H1 (cell line): ENCODE measurements at regions of chr1 and their contacts with region 1.

Region 1: DNA sequence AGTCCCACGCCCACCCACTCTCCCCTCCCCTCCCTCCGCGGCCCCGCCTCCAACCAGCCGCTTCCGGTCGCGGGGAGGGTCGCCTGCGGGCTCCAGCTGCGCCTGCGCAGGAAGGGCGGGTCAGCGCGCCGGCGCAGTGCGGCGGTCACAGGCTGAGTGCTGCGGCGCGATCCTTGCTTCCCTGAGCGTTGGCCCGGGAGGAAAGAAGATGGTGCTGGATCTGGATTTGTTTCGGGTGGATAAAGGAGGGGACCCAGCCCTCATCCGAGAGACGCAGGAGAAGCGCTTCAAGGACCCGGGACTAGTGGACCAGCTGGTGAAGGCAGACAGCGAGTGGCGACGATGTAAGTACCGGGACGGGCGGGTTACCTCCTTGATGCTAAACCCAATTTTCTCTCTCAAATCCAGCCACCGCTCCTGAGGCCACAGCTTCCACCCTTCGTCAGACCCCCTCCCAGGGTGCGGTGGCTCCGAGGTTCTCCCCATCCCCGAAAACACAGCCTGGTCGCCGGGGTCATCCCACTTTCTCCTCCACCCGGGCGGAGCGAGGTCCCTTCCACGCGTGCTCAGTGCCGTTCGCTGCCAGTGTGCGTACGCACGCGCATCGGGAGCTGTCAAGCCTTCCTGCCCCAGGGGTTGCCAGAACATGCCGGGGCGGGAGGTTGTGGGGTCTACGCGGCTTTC is at the start of gene SARS1:
- DNase-seq: peak in 1 of 2 experiments; percentile 91
- H3K4me3 ChIP-seq: peak within 1 kb of the TSS; percentile 88 to 99 (median 96)
- H3K27ac ChIP-seq: peak within 1 kb of the TSS; percentile 78
- H3K4me1 ChIP-seq: peaks cover 0 to 5% (median 2%) of the 10 kb centered on the region in 4 experiments; a peak in 2 of 7 replicates
- H3K27me3 ChIP-seq: no peaks in the 10 kb centered on the region
- CTCF ChIP-seq: no peak
- EP300 ChIP-seq: no peak
- POLR2A ChIP-seq: peak in 1 of 2 experiments; percentile 69; a peak in 1 of 3 replicates
- RAD21 ChIP-seq: no peak
- total RNA-seq, gene SARS1: 136 and 146 TPM in 2 replicates

Region 2: GRCh38 chr1:109201123-109201703 is 12.7 kb before region 1 on chr1:
- CTCF ChIA-PET with region 1: interaction called, 82 read pairs
- POLR2A ChIA-PET with region 1: interaction called, 24 read pairs
- DNase-seq: peak in 1 of 2 experiments; percentile 86
- H3K4me3 ChIP-seq: no peak overlapping the region
- H3K27ac ChIP-seq: no peak overlapping the region
- H3K4me1 ChIP-seq: peaks cover 0 to 4% (median 1%) of the 10 kb centered on the region in 4 experiments; a peak in 1 of 7 replicates
- H3K27me3 ChIP-seq: no peaks in the 10 kb centered on the region; a peak in 1 of 7 replicates
- CTCF ChIP-seq: peak; percentile 65 to 82 (median 75)
- EP300 ChIP-seq: no peak
- POLR2A ChIP-seq: no peak
- RAD21 ChIP-seq: peak; percentile 80 to 90

Region 3: DNA sequence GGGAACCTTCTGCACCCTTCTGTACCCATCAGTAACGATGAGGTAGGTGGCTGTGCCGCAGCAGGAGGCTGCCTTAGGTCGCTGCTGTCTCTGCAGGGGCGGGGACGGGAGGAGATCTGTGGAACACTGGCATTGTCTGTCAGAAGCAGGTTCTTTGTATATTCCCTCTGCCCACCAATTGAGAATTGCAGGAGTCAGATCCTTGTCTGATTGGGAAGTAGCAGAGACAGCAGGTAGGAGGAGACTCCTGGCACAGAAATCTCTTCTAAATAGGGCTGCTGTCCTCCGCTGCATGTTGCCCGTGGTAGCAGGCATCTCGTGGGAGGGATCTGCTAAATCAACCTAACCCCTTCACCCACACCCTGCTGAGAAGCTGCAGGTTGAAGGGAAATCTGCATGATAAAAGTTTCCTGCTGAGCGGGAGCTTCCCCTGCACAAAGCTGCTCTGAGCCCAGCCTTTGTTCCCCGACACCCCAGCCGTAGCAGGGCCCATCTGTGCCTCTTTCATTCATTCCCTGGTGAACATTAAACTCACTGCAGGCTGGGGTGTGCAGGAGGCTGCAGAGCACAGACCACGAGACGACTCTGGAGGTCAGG is 15.7 kb after region 1 on chr1:
- CTCF ChIA-PET with region 1: interaction called, 651 read pairs
- POLR2A ChIA-PET with region 1: interaction called, 45 read pairs
- DNase-seq: peak; percentile 88 to 96
- H3K4me3 ChIP-seq: peak overlapping the region; percentile 22 to 43 (median 34); a peak in 7 of 8 replicates
- H3K27ac ChIP-seq: peak overlapping the region; percentile 47
- H3K4me1 ChIP-seq: peaks cover 9 to 33% (median 15%) of the 10 kb centered on the region in 4 experiments
- H3K27me3 ChIP-seq: no peaks in the 10 kb centered on the region
- CTCF ChIP-seq: no peak
- EP300 ChIP-seq: peak in 1 of 2 experiments; percentile 75; a peak in 1 of 3 replicates
- POLR2A ChIP-seq: no peak; a peak in 1 of 3 replicates
- RAD21 ChIP-seq: 0 out of 4 replicates have a peak, but pooled peaks of 1 of the 2 experiments have one; percentile 21

Region 4: GRCh38 chr1:109239580-109240095 is 25.7 kb after region 1 on chr1:
- CTCF ChIA-PET with region 1: interaction called, 651 read pairs
- POLR2A ChIA-PET with region 1: interaction called, 45 read pairs
- DNase-seq: peak; percentile 65 to 75
- H3K4me3 ChIP-seq: no peak overlapping the region
- H3K27ac ChIP-seq: peak overlapping the region; percentile 13; the same call in 1 of the 2 replicates
- H3K4me1 ChIP-seq: peaks cover 21 to 44% (median 31%) of the 10 kb centered on the region in 4 experiments
- H3K27me3 ChIP-seq: no peaks in the 10 kb centered on the region
- CTCF ChIP-seq: peak; percentile 78 to 91 (median 89)
- EP300 ChIP-seq: 0 out of 3 replicates have a peak, but pooled peaks of 1 of the 2 experiments have one; percentile 3
- POLR2A ChIP-seq: no peak
- RAD21 ChIP-seq: peak; percentile 29 to 60

Region 5: DNA sequence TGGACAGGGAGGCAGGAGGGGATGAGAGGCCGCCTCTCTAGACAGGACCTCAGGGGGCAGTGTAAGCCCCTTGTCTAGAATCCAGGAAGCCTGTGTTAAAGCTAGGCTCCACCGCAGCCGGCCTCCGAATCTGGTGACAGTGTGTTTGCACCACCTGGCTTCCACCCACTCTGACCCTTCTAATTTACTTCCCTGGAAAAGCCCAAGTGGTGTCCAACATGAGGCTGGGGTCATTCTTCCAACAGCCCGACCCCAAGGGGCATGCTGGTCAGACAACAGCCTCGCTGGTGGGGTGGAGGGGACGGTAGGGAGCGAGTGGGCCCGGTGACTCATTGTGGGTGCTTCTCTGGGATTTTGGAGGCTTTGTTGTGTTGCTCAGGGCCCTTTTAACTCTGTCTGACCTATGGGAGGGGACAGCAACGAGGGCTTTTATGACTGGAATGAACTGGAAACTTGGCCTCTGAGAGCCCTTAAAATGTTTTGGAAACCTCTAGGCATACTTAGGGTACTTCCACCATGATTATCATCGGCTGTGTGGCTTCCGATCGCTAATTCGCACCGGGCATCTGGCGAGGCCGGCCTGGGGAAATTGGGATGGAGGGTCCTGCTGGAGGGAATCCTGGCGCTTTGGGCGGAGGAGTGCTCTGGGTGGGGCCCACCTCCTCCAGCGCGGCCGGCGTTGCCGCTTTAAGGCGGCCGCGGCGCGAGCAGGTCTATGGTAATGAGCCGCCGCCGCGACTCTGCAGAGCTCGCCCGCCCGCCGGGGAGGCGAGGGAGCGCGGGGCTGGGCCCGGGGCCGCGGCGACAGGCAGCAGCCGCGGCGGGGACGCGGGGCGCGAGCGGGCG is 35.1 kb after region 1 on chr1 and contains the start of gene CELSR2:
- CTCF ChIA-PET with region 1: interaction called, 651 read pairs
- POLR2A ChIA-PET with region 1: interaction called, 36 read pairs
- DNase-seq: peak; percentile 66 to 90
- H3K4me3 ChIP-seq: peak within 1 kb of the TSS; percentile 28 to 62 (median 34); a peak in 7 of 8 replicates
- H3K27ac ChIP-seq: no peak within 1 kb of the TSS; the same call in 1 of the 2 replicates
- H3K4me1 ChIP-seq: peaks cover 0 to 23% (median 20%) of the 10 kb centered on the region in 4 experiments; a peak in 6 of 7 replicates
- H3K27me3 ChIP-seq: peaks cover 0 to 22% (median 16%) of the 10 kb centered on the region in 4 experiments; a peak in 5 of 7 replicates
- CTCF ChIP-seq: peak in 1 of 3 experiments; percentile 38; a peak in 2 of 4 replicates
- EP300 ChIP-seq: no peak
- POLR2A ChIP-seq: no peak
- RAD21 ChIP-seq: peak in 1 of 2 experiments; percentile 16; a peak in 1 of 4 replicates
- total RNA-seq, gene CELSR2: 27.7 and 28.0 TPM in 2 replicates

Region 6: DNA sequence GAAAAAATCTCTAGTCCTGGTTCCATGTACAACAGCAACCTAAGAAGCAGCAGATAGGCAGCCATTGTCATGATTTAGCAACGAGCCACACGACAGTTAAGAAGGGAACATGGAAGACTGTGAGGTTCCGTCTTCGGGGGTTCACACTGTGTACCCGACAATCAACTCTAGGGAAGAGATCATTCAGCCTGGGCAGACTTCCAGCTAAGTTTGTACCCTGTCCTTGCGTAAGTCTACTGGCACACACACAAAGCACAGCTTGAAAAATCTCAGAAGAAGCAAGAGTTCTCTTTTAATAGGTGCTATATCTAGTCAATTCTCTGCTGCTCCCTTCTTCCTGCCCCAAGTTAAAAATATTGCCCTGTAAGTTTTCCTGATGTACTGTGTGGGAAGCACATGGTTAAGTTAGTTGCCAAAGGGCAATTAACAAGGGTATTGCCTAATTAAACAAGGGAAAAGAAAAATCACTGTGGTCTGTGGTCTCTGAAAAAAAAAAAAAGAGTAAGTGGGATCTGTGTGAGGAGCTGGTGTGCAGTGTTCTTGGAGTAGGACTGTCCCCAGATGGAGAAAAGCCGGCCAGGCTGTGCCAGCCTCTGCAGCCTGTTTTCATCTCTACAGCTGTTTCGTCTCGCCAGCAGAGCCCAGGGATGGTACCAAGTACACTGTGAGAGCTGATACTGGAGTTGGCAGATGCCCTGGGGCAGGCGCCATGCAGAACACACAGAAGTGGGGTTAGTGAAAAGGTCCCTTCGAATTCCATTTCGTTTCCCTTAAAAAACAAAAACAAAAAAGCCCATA is 99.2 kb after region 1 on chr1:
- CTCF ChIA-PET with region 1: no interaction called
- POLR2A ChIA-PET with region 1: no interaction called
- DNase-seq: no peak
- H3K4me3 ChIP-seq: no peak overlapping the region
- H3K27ac ChIP-seq: no peak overlapping the region
- H3K4me1 ChIP-seq: no peaks in the 10 kb centered on the region
- H3K27me3 ChIP-seq: no peaks in the 10 kb centered on the region
- CTCF ChIP-seq: no peak
- EP300 ChIP-seq: no peak
- POLR2A ChIP-seq: no peak
- RAD21 ChIP-seq: no peak